Panc1 (cell line): ENCODE measurements at regions of chr1 and their contacts with region 1.

Region 1: GRCh38 chr1:52825868-52826267 is 16.7 kb upstream of the ZYG11A start:
- DNase-seq: no peak
- ATAC-seq: peak; percentile 71; the same call in 1 of the 2 replicates
- H3K4me3 ChIP-seq: no peak overlapping the region
- H3K27ac ChIP-seq: no peak overlapping the region
- H3K4me1 ChIP-seq: no peaks in the 10 kb centered on the region
- H3K27me3 ChIP-seq: no peaks in the 10 kb centered on the region
- CTCF ChIP-seq: peak; percentile 43; the same call in 1 of the 2 replicates

Region 2: DNA sequence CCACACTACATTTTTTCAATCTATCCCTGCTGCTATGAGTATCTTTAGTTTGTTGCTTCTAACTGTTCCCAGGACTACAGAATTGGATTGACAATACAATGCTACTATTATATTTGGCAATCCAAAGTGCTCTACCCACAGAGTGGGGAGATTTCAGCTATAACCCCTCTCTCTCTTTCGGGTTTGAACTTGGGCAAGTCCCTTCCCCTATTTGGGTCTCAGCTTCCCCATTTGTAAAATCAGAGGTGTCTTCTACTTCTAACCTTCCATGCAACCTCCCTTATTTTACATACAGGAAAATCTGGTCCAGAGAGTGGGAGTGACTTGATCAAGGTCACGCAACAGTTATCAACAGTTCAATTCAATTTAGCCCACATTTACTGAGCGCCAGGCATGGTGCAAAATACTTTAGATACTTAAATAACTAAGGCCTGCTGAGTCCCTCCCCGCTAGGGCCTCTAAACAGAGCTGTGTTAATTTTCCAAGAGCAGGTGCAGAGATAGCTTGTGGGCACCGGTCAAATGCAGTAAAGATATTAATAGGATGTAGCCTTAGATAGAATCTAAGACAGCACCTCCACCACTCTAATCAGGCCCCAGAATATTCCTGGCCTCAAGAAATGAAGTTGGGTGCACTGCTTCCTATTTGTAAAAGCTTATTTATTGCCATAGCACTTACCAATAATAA is 233.1 kb before region 1 on chr1:
- CTCF ChIA-PET with region 1: interaction called, 12 read pairs
- POLR2A ChIA-PET with region 1: no interaction called
- in situ Hi-C with region 1: no loop called
- intact Hi-C with region 1: no loop called
- DNase-seq: no peak
- ATAC-seq: no peak
- H3K4me3 ChIP-seq: no peak overlapping the region
- H3K27ac ChIP-seq: no peak overlapping the region
- H3K4me1 ChIP-seq: no peaks in the 10 kb centered on the region
- H3K27me3 ChIP-seq: no peaks in the 10 kb centered on the region; the same call in 1 of the 2 replicates
- CTCF ChIP-seq: no peak

Region 3: DNA sequence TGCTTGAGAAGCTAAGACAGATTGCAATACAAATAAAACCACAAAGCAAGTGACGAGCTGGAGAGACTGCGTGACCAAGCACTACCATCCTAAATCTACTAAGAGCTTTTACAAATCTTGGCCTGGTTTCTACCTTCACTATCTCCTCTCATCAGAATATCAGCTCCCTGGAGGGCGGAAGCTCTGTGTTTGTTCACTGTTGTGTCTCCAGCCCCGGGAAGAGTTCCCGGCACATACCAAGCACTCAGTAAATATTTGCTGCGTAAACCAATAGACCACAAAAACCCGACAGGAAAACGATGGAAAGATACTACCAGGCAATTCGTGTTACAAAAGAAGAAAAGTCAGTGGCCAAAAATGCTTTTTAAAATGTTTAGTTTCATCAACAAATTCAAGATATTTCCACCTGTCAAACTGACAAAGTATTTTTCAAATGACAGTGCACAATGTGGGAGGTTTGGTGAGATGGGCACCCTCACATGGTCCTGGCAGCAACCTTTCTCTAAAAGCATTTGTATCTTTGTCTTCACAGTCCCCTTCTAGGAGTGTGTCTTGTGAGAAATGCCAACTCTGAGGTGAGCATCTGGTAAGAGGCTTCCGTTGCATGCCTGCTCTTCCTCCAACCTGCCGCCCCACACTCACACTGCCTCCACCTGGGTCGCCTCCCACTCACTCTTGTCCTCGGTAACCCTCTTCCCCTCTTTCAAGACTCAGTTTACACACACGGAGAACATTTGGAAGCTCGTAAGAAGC is 281.9 kb after region 1 on chr1:
- CTCF ChIA-PET with region 1: interaction called, 11 read pairs
- POLR2A ChIA-PET with region 1: no interaction called
- in situ Hi-C with region 1: no loop called
- intact Hi-C with region 1: no loop called
- DNase-seq: peak; percentile 25
- ATAC-seq: peak; percentile 94
- H3K4me3 ChIP-seq: no peak overlapping the region
- H3K27ac ChIP-seq: peak overlapping the region; percentile 77
- H3K4me1 ChIP-seq: peaks cover 25% of the 10 kb centered on the region
- H3K27me3 ChIP-seq: no peaks in the 10 kb centered on the region
- CTCF ChIP-seq: no peak

Region 4: GRCh38 chr1:53348486-53349368 is 522.9 kb after region 1 on chr1:
- CTCF ChIA-PET with region 1: no interaction called
- POLR2A ChIA-PET with region 1: no interaction called
- in situ Hi-C with region 1: no loop called
- intact Hi-C with region 1: no loop called
- DNase-seq: no peak
- ATAC-seq: 0 out of 2 replicates have a peak, but pooled peaks have one; percentile 25
- H3K4me3 ChIP-seq: no peak overlapping the region
- H3K27ac ChIP-seq: no peak overlapping the region
- H3K4me1 ChIP-seq: no peaks in the 10 kb centered on the region
- H3K27me3 ChIP-seq: no peaks in the 10 kb centered on the region
- CTCF ChIP-seq: no peak